ENCODE measurements at regions of chr22 and their contacts with region 1.

Region 1: DNA sequence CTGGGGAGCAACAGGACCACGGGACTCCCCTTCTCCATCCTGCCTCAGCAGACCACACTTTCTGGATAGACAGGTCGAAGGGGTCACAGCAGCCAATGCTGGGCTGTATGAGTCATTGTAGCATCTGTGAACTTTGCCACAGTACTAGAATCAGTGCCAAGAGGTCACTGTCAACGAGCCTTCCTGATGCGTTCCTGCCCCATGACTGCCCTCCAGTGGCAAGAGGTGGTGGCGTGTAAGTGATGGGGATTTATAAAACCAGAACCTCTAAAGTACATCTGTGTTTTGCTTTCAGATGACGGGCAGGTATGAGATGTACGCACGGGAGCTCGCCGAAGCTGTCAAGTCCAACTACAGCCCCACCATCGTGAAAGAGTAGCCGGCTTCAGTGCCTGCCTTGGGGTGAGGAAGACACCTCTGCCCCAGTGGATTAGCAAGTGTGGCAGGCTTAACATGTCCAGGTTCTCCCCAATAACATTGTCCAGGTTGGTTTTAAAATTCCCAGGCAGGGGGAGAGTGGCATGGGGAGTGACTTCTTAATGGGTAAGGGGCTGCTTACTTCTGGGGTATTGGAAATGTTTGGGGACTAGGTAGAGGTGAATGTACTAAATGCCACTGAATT is 29.4 kb downstream of the GUCD1 start:
- DNase-seq: peak; percentile 51 to 91
- H3K4me3 ChIP-seq: no peak overlapping the region
- H3K27ac ChIP-seq: no peak overlapping the region
- H3K4me1 ChIP-seq: peaks cover 0 to 3% (median 0%) of the 10 kb centered on the region in 4 experiments; a peak in 3 of 7 replicates
- H3K27me3 ChIP-seq: no peaks in the 10 kb centered on the region
- CTCF ChIP-seq: peak; percentile 90 to 98 (median 97)
- EP300 ChIP-seq: no peak
- POLR2A ChIP-seq: no peak
- RAD21 ChIP-seq: peak; percentile 94 to 95

Region 2: GRCh38 chr22:23938328-23939016 is 587.1 kb before region 1 on chr22:
- CTCF ChIA-PET with region 1: no interaction called
- POLR2A ChIA-PET with region 1: no interaction called
- DNase-seq: no peak
- H3K4me3 ChIP-seq: no peak overlapping the region
- H3K27ac ChIP-seq: no peak overlapping the region
- H3K4me1 ChIP-seq: no peaks in the 10 kb centered on the region
- H3K27me3 ChIP-seq: no peaks in the 10 kb centered on the region
- CTCF ChIP-seq: no peak
- EP300 ChIP-seq: no peak
- POLR2A ChIP-seq: no peak
- RAD21 ChIP-seq: no peak

Region 3: DNA sequence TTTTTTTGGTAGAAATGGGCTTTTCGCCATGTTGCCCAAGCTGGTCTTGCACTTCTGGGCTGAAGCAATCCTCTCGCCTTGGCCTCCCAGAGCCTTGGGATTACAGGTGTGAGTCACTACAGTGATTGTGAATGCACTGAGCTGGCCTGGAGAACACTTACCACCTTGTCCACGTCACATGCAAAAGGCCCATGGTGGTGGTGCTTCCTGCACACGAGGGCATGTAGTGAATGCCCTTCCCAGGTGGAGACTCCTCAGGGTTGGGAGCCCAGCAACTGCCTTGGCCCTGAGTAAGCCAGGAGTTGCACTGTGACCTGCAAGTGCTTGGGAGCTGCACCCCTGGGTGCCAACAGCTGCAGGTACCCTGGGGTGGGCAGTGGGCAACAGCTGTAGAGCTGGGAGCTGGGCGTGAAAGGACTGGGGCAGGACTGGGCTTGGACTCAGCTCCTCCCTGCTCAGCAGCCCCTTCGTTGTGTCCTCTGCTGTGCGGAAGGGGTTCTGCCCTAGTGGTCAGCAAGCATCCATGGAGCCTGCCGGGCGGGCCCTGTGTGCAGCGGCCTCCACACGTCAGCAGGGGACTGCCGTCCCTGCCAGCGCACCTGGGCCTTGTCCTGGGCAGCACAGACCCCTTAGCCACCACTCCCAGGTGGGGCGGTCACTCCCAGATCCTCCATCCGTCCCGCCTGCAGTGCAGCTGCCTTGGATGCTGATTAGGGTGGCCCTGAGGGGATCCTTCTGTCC is 107.5 kb before region 1 on chr22:
- CTCF ChIA-PET with region 1: interaction called, 74 read pairs
- POLR2A ChIA-PET with region 1: interaction called, 3 read pairs
- DNase-seq: no peak
- H3K4me3 ChIP-seq: no peak overlapping the region
- H3K27ac ChIP-seq: 0 out of 2 replicates have a peak overlapping the region, but pooled peaks have one; percentile 43
- H3K4me1 ChIP-seq: peaks cover 0 to 32% (median 15%) of the 10 kb centered on the region in 4 experiments; a peak in 6 of 7 replicates
- H3K27me3 ChIP-seq: no peaks in the 10 kb centered on the region
- CTCF ChIP-seq: no peak
- EP300 ChIP-seq: no peak
- POLR2A ChIP-seq: no peak
- RAD21 ChIP-seq: no peak

Region 4: GRCh38 chr22:24433813-24434470 is 91.6 kb before region 1 on chr22:
- CTCF ChIA-PET with region 1: interaction called, 13 read pairs
- POLR2A ChIA-PET with region 1: no interaction called
- DNase-seq: no peak
- H3K4me3 ChIP-seq: no peak overlapping the region
- H3K27ac ChIP-seq: no peak overlapping the region
- H3K4me1 ChIP-seq: peaks cover 2 to 3% (median 2%) of the 10 kb centered on the region in 4 experiments; a peak in 6 of 7 replicates
- H3K27me3 ChIP-seq: no peaks in the 10 kb centered on the region; a peak in 1 of 7 replicates
- CTCF ChIP-seq: no peak
- EP300 ChIP-seq: no peak
- POLR2A ChIP-seq: no peak
- RAD21 ChIP-seq: no peak

Region 5: DNA sequence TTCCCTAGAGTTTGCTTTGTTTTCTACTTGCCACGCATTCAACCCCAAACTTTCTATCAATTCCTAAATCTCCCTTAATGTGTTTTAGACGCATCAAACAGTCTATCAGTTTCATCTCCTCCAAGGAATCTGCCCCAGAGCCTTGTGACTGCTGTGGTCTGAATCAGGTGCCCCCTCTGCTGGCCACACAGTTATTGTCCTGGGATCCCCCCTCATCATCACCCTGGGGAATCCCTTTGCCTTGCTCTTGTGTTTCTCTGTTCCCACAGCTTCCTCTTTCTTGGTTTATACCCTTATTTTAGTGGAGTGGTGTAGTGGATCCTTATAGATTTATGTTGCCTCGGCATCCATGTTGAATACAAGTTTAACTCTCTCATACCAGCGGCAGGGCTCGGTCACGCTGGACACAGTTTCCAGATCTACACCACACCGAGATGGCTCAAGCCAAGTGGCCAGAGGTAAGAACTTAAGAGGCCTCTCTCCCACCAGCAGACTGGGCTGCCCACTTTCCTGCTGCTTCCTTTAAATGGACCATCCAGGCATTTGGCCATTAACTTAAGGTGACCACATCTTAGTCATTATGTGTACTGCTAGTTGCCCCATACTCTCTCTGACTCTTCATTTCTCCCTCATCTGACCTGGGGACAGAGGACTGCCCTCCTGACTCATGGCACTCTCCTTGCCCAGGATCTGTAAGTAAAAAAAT is 22.2 kb before region 1 on chr22:
- CTCF ChIA-PET with region 1: interaction called, 70 read pairs
- POLR2A ChIA-PET with region 1: no interaction called
- DNase-seq: peak in 1 of 2 experiments; percentile 83
- H3K4me3 ChIP-seq: no peak overlapping the region
- H3K27ac ChIP-seq: no peak overlapping the region
- H3K4me1 ChIP-seq: peaks cover 3 to 15% (median 9%) of the 10 kb centered on the region in 4 experiments; a peak in 5 of 7 replicates
- H3K27me3 ChIP-seq: peaks cover 0 to 2% (median 0%) of the 10 kb centered on the region in 4 experiments; a peak in 3 of 7 replicates
- CTCF ChIP-seq: peak; percentile 80 to 87 (median 82)
- EP300 ChIP-seq: no peak
- POLR2A ChIP-seq: no peak
- RAD21 ChIP-seq: peak; percentile 74 to 83

Region 6: DNA sequence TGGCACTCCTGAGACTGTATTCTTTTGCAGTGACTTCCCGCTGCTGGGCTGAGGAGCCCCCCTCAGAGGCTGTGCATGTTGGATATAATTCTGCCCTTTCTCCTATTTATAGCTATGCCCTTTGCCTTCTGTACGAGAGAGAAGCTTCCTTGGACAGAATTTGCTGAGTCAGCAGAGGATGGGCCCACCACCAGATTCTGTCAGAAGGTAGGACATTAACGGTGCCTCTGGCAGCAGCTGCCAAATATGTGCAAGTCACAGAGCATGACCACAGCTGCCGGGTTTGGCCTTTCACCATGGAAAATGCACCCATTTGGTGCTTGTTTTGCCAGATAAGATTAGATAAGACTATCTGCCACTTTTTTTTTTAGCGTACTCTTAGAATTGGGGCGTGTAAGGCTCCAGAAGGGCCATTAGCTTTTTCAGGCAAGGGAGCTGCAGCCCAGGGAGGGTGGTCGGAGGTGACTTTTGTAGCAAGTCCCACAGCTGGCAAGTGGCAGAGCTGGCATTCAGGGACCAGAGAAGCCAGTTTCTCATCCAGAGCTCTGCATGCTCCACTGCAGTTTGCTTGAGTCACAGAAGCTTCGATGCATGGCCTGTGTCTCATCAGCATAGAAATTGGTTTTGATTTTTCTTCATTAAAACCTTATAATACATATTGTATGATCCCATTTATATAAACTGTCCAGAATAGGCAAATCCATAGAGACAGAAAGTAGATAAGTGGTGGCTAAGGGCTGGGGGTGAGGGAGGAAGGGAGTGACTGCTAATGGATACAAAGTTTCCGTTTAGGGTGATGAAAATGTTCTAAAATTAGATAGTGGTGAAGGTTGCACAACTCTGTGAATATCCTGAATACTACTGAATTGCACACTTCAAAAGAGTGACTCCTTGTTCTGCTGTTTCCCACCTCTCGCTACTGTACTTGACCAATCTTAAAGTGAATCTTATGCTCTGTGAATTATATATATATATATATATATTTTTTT is 14.6 kb before region 1 on chr22:
- CTCF ChIA-PET with region 1: interaction called, 70 read pairs
- POLR2A ChIA-PET with region 1: no interaction called
- DNase-seq: no peak
- H3K4me3 ChIP-seq: no peak overlapping the region
- H3K27ac ChIP-seq: no peak overlapping the region
- H3K4me1 ChIP-seq: peaks cover 0 to 13% (median 9%) of the 10 kb centered on the region in 4 experiments; a peak in 4 of 7 replicates
- H3K27me3 ChIP-seq: no peaks in the 10 kb centered on the region
- CTCF ChIP-seq: no peak
- EP300 ChIP-seq: no peak
- POLR2A ChIP-seq: no peak
- RAD21 ChIP-seq: no peak

Region 7: DNA sequence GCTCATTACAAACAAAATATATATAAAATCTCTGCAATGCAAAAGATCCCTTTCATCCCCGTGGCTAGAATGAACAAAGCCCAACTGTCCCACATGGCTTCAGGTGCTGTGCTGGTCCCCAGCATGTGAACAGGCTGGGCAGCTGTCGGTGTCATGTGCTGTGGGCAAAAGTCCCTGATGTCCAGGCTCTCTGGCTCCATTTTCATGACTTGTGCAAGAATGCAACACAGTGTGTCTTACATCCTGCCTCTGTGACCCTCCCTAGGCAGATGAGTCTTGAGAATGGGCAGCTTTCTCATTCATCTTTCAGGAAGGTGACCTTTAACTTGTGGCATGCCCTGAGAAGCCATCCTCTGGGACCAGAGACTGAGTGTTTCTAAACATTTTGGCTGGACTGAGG is 14.9 kb after region 1 on chr22:
- CTCF ChIA-PET with region 1: interaction called, 11 read pairs
- POLR2A ChIA-PET with region 1: interaction called, 5 read pairs
- DNase-seq: no peak
- H3K4me3 ChIP-seq: no peak overlapping the region
- H3K27ac ChIP-seq: no peak overlapping the region
- H3K4me1 ChIP-seq: no peaks in the 10 kb centered on the region
- H3K27me3 ChIP-seq: no peaks in the 10 kb centered on the region; a peak in 1 of 7 replicates
- CTCF ChIP-seq: no peak
- EP300 ChIP-seq: no peak
- POLR2A ChIP-seq: no peak
- RAD21 ChIP-seq: no peak

Region 8: GRCh38 chr22:24576778-24577177 is 51.3 kb after region 1 on chr22:
- CTCF ChIA-PET with region 1: no interaction called
- POLR2A ChIA-PET with region 1: no interaction called
- DNase-seq: no peak
- H3K4me3 ChIP-seq: no peak overlapping the region
- H3K27ac ChIP-seq: no peak overlapping the region
- H3K4me1 ChIP-seq: no peaks in the 10 kb centered on the region; a peak in 1 of 7 replicates
- H3K27me3 ChIP-seq: no peaks in the 10 kb centered on the region
- CTCF ChIP-seq: no peak
- EP300 ChIP-seq: no peak
- POLR2A ChIP-seq: no peak
- RAD21 ChIP-seq: no peak

Measured in H1 (cell line).